ENCODE measurements at regions of chr1 and their contacts with region 1.

Region 1: DNA sequence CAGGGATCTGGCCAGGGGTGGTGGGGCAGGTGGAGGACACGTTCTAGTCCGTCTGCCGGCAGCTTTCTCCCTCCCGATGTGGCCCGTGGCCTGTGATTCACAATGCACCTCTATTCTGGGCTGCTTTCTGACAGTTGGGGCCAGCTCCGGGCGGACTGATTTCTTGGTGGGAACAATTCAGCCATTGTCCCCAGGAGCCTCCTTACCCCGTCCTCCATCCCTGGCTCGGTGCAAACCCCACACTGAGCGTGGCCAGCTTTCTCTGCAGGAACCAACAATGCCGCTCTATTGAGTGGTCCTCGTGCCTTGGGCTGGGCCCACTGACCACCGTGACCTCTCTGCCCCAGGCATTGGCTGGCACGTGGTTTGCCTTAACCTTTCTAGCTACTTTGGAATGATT is 29.7 kb downstream of the PADI2 start:
- DNase-seq: no peak
- H3K4me3 ChIP-seq: no peak overlapping the region
- H3K27ac ChIP-seq: no peak overlapping the region
- H3K4me1 ChIP-seq: no peaks in the 10 kb centered on the region
- H3K27me3 ChIP-seq: no peaks in the 10 kb centered on the region
- CTCF ChIP-seq: no peak

Region 2: DNA sequence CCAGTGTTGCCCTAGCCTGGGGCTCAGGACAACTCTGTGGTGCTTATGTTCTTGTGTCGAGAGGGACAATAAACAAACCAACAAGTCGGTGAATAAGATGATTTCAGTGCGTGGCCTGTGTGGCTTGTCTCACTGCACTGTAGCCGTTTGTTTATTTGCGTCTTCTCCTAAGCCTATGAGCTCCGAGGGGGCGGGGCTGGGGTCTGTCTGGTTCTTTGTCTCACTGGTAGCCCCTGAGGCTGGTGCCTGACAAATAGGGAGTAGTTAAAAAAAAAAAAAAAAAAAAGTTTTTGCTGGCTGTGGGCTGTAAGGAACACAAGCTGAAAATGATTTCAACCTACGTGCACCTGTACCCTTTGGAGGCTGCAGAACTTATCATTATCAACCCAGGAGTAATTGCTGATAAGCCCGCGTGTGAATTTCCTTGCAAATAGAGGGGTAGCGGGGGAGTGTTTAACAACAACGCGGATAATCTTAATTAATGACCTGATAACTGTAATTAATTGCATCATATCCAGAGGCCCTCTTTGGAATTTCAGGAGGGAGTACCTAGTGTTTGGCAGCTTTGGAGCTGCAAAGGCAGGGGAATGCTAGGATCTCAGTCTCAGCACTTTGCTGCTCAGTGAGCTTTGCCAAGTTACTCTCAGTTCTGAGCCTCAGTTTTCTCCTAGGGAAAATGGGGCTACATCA is 449.1 kb after region 1 on chr1:
- CTCF ChIA-PET with region 1: interaction called, 10 read pairs
- POLR2A ChIA-PET with region 1: no interaction called
- intact Hi-C with region 1: no loop called
- DNase-seq: no peak
- H3K4me3 ChIP-seq: no peak overlapping the region; the same call in 1 of the 2 replicates
- H3K27ac ChIP-seq: no peak overlapping the region
- H3K4me1 ChIP-seq: peaks cover 8% of the 10 kb centered on the region; the same call in 1 of the 2 replicates
- H3K27me3 ChIP-seq: no peaks in the 10 kb centered on the region
- CTCF ChIP-seq: no peak